Activated CD8-positive, alpha-beta T cell treated with anti-CD3 and anti-CD28 coated beads, Interleukin-2, amount 10 ng/mL, durations not matched to agents 7 days and 5 days (primary cell): ENCODE measurements at regions of chr1 and their contacts with region 1.

Region 1: DNA sequence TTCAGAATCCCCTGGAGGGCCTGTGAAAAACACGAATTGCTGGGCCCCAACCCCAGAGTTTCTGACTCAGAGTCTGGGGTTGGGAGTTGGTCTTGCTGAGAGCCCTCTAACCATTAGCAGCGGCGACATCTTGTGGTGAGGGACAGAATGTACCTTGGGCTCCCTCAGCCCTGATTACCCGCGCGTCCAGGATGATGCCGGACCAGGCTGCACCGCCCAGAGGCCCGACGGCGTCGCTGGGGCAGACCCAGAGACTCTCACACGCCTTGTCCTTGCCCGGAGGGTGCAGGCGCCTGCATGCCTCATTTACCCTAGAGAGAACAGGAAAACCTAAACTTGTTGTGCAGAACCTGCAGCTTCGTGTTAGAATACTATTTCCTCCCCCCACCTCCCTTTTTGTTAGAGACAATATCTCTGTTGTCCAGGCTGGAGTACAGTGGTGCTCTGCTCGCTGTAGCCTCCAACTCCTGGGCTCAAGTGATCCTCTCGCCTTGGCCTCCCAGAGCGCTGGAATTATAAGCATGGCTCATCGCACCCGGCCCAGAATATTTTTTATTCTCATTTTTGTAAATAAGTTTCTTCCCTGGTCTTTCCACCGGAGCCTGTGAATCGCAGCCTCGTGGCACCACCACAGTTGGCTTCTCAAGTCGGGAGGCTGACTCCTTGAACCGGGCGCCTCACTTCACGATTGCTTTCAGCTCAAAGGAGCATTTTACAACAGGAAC is 22.2 kb upstream of the RD3 start:
- DNase-seq: peak; percentile 85
- ATAC-seq: peak; percentile 78
- H3K4me3 Mint-ChIP-seq: peak overlapping the region; percentile 60
- H3K27ac Mint-ChIP-seq: peak overlapping the region; percentile 31
- H3K4me1 Mint-ChIP-seq: peaks cover 47% of the 10 kb centered on the region
- H3K27me3 Mint-ChIP-seq: peaks cover 6% of the 10 kb centered on the region

Region 2: GRCh38 chr1:211133836-211134669 is 380.1 kb before region 1 on chr1 and contains the start of gene KCNH1:
- CTCF ChIA-PET with region 1: interaction called, 11 read pairs
- POLR2A ChIA-PET with region 1: no interaction called
- DNase-seq: peak; percentile 85
- ATAC-seq: peak; percentile 96
- H3K4me3 Mint-ChIP-seq: peak within 1 kb of the TSS; percentile 40
- H3K27ac Mint-ChIP-seq: no peak within 1 kb of the TSS
- H3K4me1 Mint-ChIP-seq: peaks cover 10% of the 10 kb centered on the region
- H3K27me3 Mint-ChIP-seq: peaks cover 63% of the 10 kb centered on the region
- total RNA-seq, gene KCNH1: not detected

Region 3: GRCh38 chr1:211469938-211470529 is 44.2 kb before region 1 on chr1:
- CTCF ChIA-PET with region 1: interaction called, 24 read pairs
- POLR2A ChIA-PET with region 1: no interaction called
- DNase-seq: peak; percentile 44
- ATAC-seq: peak; percentile 44
- H3K4me3 Mint-ChIP-seq: no peak overlapping the region
- H3K27ac Mint-ChIP-seq: no peak overlapping the region
- H3K4me1 Mint-ChIP-seq: no peaks in the 10 kb centered on the region
- H3K27me3 Mint-ChIP-seq: peaks cover 27% of the 10 kb centered on the region

Region 4: GRCh38 chr1:211501711-211502400 is 12.3 kb before region 1 on chr1:
- CTCF ChIA-PET with region 1: interaction called, 13 read pairs
- POLR2A ChIA-PET with region 1: no interaction called
- DNase-seq: no peak
- ATAC-seq: no peak
- H3K4me3 Mint-ChIP-seq: no peak overlapping the region
- H3K27ac Mint-ChIP-seq: no peak overlapping the region
- H3K4me1 Mint-ChIP-seq: no peaks in the 10 kb centered on the region
- H3K27me3 Mint-ChIP-seq: peaks cover 16% of the 10 kb centered on the region

Region 5: GRCh38 chr1:211578640-211579433 is 64.6 kb after region 1 on chr1 and contains the start of gene SLC30A1:
- CTCF ChIA-PET with region 1: interaction called, 13 read pairs
- POLR2A ChIA-PET with region 1: interaction called, 3 read pairs
- DNase-seq: peak; percentile 100
- ATAC-seq: peak; percentile 90
- H3K4me3 Mint-ChIP-seq: peak within 1 kb of the TSS; percentile 97
- H3K27ac Mint-ChIP-seq: peak within 1 kb of the TSS; percentile 92
- H3K4me1 Mint-ChIP-seq: peaks cover 59% of the 10 kb centered on the region
- H3K27me3 Mint-ChIP-seq: peaks cover under 1% of the 10 kb centered on the region
- total RNA-seq, gene SLC30A1: 14.5 to 15.6 TPM

Region 6: GRCh38 chr1:211654838-211655787 is 140.9 kb after region 1 on chr1:
- CTCF ChIA-PET with region 1: interaction called, 37 read pairs
- POLR2A ChIA-PET with region 1: no interaction called
- DNase-seq: peak; percentile 88
- ATAC-seq: peak; percentile 97
- H3K4me3 Mint-ChIP-seq: no peak overlapping the region
- H3K27ac Mint-ChIP-seq: no peak overlapping the region
- H3K4me1 Mint-ChIP-seq: peaks cover 4% of the 10 kb centered on the region
- H3K27me3 Mint-ChIP-seq: peaks cover 12% of the 10 kb centered on the region

Region 7: GRCh38 chr1:211695135-211695816 is 181.1 kb after region 1 on chr1:
- CTCF ChIA-PET with region 1: no interaction called
- POLR2A ChIA-PET with region 1: no interaction called
- DNase-seq: peak; percentile 49
- ATAC-seq: peak; percentile 9
- H3K4me3 Mint-ChIP-seq: no peak overlapping the region
- H3K27ac Mint-ChIP-seq: peak overlapping the region; percentile 68
- H3K4me1 Mint-ChIP-seq: peaks cover 50% of the 10 kb centered on the region
- H3K27me3 Mint-ChIP-seq: peaks cover 5% of the 10 kb centered on the region

Region 8: GRCh38 chr1:212186427-212187207 is 672.4 kb after region 1 on chr1:
- CTCF ChIA-PET with region 1: no interaction called
- POLR2A ChIA-PET with region 1: no interaction called
- DNase-seq: peak; percentile 35
- ATAC-seq: peak; percentile 72
- H3K4me3 Mint-ChIP-seq: peak overlapping the region; percentile 56
- H3K27ac Mint-ChIP-seq: peak overlapping the region; percentile 90
- H3K4me1 Mint-ChIP-seq: peaks cover 38% of the 10 kb centered on the region
- H3K27me3 Mint-ChIP-seq: no peaks in the 10 kb centered on the region